ENCODE measurements at regions of chr2 and their contacts with region 1.

Region 1: DNA sequence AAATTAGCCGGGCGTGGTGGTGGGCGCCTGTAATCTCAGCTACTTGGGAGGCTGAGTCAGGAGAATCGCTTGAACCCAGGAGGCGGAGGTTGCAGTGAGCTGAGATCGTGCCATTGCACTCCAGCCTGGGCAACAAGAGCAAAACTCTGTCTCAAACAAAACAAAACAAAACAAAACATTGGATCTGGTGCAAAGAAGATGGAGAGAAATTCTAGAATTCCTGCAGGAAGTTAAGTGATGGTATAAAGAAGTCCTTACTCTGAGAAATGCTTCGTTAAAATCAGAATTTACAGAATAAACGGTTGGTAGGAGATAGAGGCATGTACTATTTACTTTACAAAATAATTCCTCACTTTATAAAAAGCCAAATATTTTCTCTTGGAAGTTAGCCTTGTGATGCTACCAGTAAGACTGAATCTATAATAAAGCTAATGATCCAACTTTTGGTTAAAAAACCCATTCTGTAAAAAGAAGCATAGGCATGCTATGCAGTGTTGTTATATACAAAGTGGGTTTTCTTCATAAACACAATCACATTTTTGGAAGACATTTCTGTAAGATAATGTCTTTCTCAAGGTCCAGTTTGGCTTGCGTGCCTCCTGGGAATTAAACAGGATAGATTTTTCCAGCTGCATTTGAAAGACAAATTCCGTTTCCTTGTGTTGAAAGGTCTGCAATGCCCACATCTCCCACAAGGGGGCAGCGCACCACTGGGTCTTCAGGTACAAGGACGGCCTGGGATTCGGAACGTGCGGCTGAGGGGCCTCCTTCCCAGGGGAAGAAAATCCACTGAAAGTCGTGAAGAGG is 35.6 kb upstream of the PNO1 start:
- DNase-seq: peak; percentile 81
- ATAC-seq: peak; percentile 34
- H3K4me3 ChIP-seq: peak overlapping the region in 1 of 5 experiments; percentile 34
- H3K4me3 Mint-ChIP-seq: peak overlapping the region; percentile 50
- H3K27ac ChIP-seq: peak overlapping the region in 1 of 2 donors; percentile 88
- H3K27ac Mint-ChIP-seq: peak overlapping the region; percentile 99
- H3K4me1 ChIP-seq: peaks cover 27 to 46% of the 10 kb centered on the region in 2 donors
- H3K4me1 Mint-ChIP-seq: peaks cover 42% of the 10 kb centered on the region
- H3K27me3 ChIP-seq: no peaks in the 10 kb centered on the region
- H3K27me3 Mint-ChIP-seq: no peaks in the 10 kb centered on the region
- CTCF ChIP-seq: peak; percentile 95

Region 2: DNA sequence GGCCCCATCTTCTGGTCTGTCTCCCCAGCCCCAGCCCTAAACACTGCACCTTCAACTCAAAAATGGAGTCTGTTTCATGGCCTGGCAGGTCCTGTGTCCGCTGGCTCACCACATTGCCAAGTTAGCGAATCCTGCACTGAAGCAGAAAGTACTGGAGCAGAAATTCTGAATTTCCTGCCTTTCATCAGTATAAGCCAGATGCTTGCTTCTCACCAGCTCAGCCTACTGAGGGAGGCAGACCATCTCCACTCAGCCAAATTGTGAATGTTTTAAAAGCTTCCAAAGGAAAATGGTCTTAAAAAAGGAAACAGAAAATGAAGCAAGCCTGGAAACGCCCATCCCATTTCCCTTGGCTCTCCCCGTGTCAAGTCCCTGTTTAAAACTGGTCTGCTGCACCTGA is 217.1 kb before region 1 on chr2:
- CTCF ChIA-PET with region 1: no interaction called
- POLR2A ChIA-PET with region 1: no interaction called
- intact Hi-C with region 1: no loop called
- DNase-seq: no peak
- ATAC-seq: no peak
- H3K4me3 ChIP-seq: no peak overlapping the region
- H3K4me3 Mint-ChIP-seq: no peak overlapping the region
- H3K27ac ChIP-seq: no peak overlapping the region
- H3K27ac Mint-ChIP-seq: no peak overlapping the region
- H3K4me1 ChIP-seq: no peaks in the 10 kb centered on the region
- H3K4me1 Mint-ChIP-seq: no peaks in the 10 kb centered on the region
- H3K27me3 ChIP-seq: peaks cover 0 to 3% (median 0%) of the 10 kb centered on the region in 4 experiments
- H3K27me3 Mint-ChIP-seq: no peaks in the 10 kb centered on the region
- CTCF ChIP-seq: no peak

Region 3: DNA sequence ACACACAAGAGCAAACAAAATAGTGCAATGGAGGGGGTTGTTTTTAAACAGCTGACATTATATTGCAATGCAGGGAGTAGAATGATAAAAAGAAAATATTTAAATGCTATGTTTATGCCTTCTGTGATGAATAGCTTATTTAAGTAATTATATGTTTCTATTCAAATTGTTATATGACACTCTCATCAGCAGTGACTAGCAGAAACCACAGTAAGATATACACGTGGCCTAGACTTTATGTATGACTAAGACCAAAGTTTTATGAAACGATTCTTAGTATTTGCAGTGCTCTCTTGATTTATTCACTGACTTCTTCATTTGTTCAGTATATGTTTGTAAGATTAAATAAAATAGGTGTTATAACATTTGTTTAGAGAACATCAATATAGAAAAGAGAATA is 33.1 kb before region 1 on chr2:
- CTCF ChIA-PET with region 1: no interaction called
- POLR2A ChIA-PET with region 1: no interaction called
- intact Hi-C with region 1: no loop called
- DNase-seq: no peak
- ATAC-seq: no peak
- H3K4me3 ChIP-seq: no peak overlapping the region
- H3K4me3 Mint-ChIP-seq: no peak overlapping the region
- H3K27ac ChIP-seq: no peak overlapping the region
- H3K27ac Mint-ChIP-seq: no peak overlapping the region
- H3K4me1 ChIP-seq: no peaks in the 10 kb centered on the region
- H3K4me1 Mint-ChIP-seq: peaks cover 2% of the 10 kb centered on the region
- H3K27me3 ChIP-seq: no peaks in the 10 kb centered on the region
- H3K27me3 Mint-ChIP-seq: no peaks in the 10 kb centered on the region
- CTCF ChIP-seq: no peak

Region 4: DNA sequence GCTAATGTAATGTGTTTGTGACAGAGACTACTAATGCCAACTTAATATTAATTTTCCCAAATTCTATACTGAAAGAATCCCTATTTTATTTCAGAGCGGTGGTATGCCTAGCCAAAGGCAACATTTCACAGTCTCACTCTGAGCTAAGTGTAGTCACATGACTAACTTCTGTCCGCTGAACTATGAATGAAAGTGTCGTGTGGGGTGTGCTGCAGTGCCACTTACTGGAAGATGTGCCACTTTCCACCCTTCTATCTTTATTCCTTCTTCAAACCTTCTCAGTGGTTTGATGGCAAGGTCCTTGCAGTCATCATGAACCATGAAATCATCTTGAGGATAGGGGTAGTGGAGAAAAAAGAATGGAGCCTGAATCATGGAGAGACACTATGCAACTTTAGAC is 12.0 kb before region 1 on chr2:
- CTCF ChIA-PET with region 1: interaction called, 12 read pairs
- POLR2A ChIA-PET with region 1: no interaction called
- intact Hi-C with region 1: no loop called
- DNase-seq: peak; percentile 32
- ATAC-seq: peak; percentile 53
- H3K4me3 ChIP-seq: no peak overlapping the region
- H3K4me3 Mint-ChIP-seq: no peak overlapping the region
- H3K27ac ChIP-seq: no peak overlapping the region
- H3K27ac Mint-ChIP-seq: no peak overlapping the region
- H3K4me1 ChIP-seq: no peaks in the 10 kb centered on the region
- H3K4me1 Mint-ChIP-seq: peaks cover 2% of the 10 kb centered on the region
- H3K27me3 ChIP-seq: no peaks in the 10 kb centered on the region
- H3K27me3 Mint-ChIP-seq: no peaks in the 10 kb centered on the region
- CTCF ChIP-seq: no peak

Region 5: GRCh38 chr2:68157402-68158133 is 35.5 kb after region 1 on chr2 and contains the start of gene PNO1:
- CTCF ChIA-PET with region 1: interaction called, 24 read pairs
- POLR2A ChIA-PET with region 1: interaction called, 9 read pairs
- intact Hi-C with region 1: loop called (anchors 1 kb)
- DNase-seq: peak; percentile 98
- ATAC-seq: peak; percentile 95
- H3K4me3 ChIP-seq: peak within 1 kb of the TSS; percentile 80 to 93 (median 89)
- H3K4me3 Mint-ChIP-seq: peak within 1 kb of the TSS; percentile 97
- H3K27ac ChIP-seq: peak within 1 kb of the TSS; percentile 96 to 98
- H3K27ac Mint-ChIP-seq: peak within 1 kb of the TSS; percentile 100
- H3K4me1 ChIP-seq: peaks cover 32 to 35% of the 10 kb centered on the region in 2 donors
- H3K4me1 Mint-ChIP-seq: peaks cover 48% of the 10 kb centered on the region
- H3K27me3 ChIP-seq: no peaks in the 10 kb centered on the region
- H3K27me3 Mint-ChIP-seq: no peaks in the 10 kb centered on the region
- CTCF ChIP-seq: no peak
- total RNA-seq, gene PNO1: 10.8 and 12.3 TPM in 2 replicates

Region 6: GRCh38 chr2:68196120-68196716 is 74.1 kb after region 1 on chr2:
- CTCF ChIA-PET with region 1: interaction called, 24 read pairs
- POLR2A ChIA-PET with region 1: no interaction called
- intact Hi-C with region 1: no loop called
- DNase-seq: peak; percentile 66
- ATAC-seq: peak; percentile 41
- H3K4me3 ChIP-seq: no peak overlapping the region
- H3K4me3 Mint-ChIP-seq: no peak overlapping the region
- H3K27ac ChIP-seq: peak overlapping the region in 1 of 2 donors; percentile 39
- H3K27ac Mint-ChIP-seq: no peak overlapping the region
- H3K4me1 ChIP-seq: peaks cover 3 to 24% of the 10 kb centered on the region in 2 donors
- H3K4me1 Mint-ChIP-seq: peaks cover 56% of the 10 kb centered on the region
- H3K27me3 ChIP-seq: no peaks in the 10 kb centered on the region
- H3K27me3 Mint-ChIP-seq: no peaks in the 10 kb centered on the region
- CTCF ChIP-seq: peak; percentile 95

Region 7: DNA sequence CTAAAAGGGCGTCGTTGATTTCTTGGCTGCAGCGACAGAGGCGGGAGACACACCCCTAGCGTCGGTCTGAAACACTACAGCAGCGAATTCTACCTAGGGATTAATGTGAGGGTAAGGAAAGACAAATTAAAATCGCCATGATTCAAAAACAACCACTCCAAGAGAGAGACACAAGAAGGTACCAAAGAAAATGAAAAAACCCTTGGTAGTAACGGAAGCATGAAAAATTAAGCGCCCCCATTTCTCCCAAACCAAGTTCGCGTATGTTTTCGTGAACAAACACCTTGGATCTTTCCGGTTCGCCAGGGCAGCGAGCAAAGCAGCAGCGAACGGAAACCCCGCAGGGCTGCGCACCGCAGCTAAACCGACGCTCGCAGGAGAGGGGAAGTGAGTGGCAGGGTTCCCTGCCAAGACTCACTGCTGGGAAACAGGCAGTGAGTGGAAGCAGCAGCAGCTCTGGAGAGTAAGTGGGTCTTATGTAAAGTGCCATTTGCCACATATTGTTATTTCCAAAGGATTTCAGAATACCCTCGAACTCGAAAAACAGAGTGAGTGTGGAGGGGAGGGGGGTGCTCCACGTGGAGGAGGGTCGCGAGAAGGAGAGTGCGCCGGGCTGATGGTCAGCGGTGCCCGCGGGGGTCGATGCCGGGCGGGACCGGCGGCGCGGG is 129.2 kb after region 1 on chr2:
- CTCF ChIA-PET with region 1: interaction called, 17 read pairs
- POLR2A ChIA-PET with region 1: no interaction called
- intact Hi-C with region 1: loop called (anchors 2 kb)
- DNase-seq: peak; percentile 92
- ATAC-seq: peak; percentile 60
- H3K4me3 ChIP-seq: peak overlapping the region; percentile 76 to 97 (median 96)
- H3K4me3 Mint-ChIP-seq: peak overlapping the region; percentile 90
- H3K27ac ChIP-seq: peak overlapping the region; percentile 86 to 92
- H3K27ac Mint-ChIP-seq: peak overlapping the region; percentile 93
- H3K4me1 ChIP-seq: peaks cover 39 to 55% of the 10 kb centered on the region in 2 donors
- H3K4me1 Mint-ChIP-seq: peaks cover 36% of the 10 kb centered on the region
- H3K27me3 ChIP-seq: no peaks in the 10 kb centered on the region
- H3K27me3 Mint-ChIP-seq: no peaks in the 10 kb centered on the region
- CTCF ChIP-seq: peak; percentile 77

Region 8: DNA sequence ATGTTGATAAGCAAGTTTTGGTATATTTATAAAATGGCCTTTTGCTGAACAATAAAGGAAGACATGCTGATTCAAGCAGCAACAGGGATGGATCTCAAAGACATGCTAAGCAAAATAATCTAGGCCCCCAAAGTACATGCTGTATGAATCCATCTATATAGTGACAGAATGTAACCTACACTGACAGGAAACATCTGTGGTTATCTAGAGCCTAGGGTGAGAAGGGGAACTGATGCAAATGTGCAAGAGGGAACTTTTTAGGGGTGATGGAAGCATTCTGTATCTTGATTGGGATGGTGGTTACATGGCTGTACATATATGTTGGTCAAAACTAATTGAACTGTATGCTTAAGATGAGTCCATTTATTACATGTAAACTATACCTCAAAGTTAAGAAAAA is 173.4 kb after region 1 on chr2:
- CTCF ChIA-PET with region 1: interaction called, 14 read pairs
- POLR2A ChIA-PET with region 1: no interaction called
- intact Hi-C with region 1: no loop called
- DNase-seq: peak; percentile 47
- ATAC-seq: no peak
- H3K4me3 ChIP-seq: no peak overlapping the region
- H3K4me3 Mint-ChIP-seq: no peak overlapping the region
- H3K27ac ChIP-seq: no peak overlapping the region
- H3K27ac Mint-ChIP-seq: no peak overlapping the region
- H3K4me1 ChIP-seq: peaks cover 11 to 12% of the 10 kb centered on the region in 2 donors
- H3K4me1 Mint-ChIP-seq: peaks cover 15% of the 10 kb centered on the region
- H3K27me3 ChIP-seq: no peaks in the 10 kb centered on the region
- H3K27me3 Mint-ChIP-seq: no peaks in the 10 kb centered on the region
- CTCF ChIP-seq: no peak